ENCODE measurements at regions of chr9 and their contacts with region 1.

Region 1: GRCh38 chr9:4555251-4555650 is 65.0 kb downstream of the SLC1A1 start:
- DNase-seq: peak; percentile 25
- H3K4me3 Mint-ChIP-seq: no peak overlapping the region
- H3K27ac Mint-ChIP-seq: no peak overlapping the region
- H3K4me1 Mint-ChIP-seq: peaks cover 32% of the 10 kb centered on the region
- H3K27me3 Mint-ChIP-seq: no peaks in the 10 kb centered on the region

Region 2: GRCh38 chr9:3281399-3281798 is 1273.9 kb before region 1 on chr9:
- CTCF ChIA-PET with region 1: no interaction called
- intact Hi-C with region 1: no loop called
- DNase-seq: no peak
- H3K4me3 Mint-ChIP-seq: no peak overlapping the region
- H3K27ac Mint-ChIP-seq: no peak overlapping the region
- H3K4me1 Mint-ChIP-seq: peaks cover 5% of the 10 kb centered on the region
- H3K27me3 Mint-ChIP-seq: no peaks in the 10 kb centered on the region

Region 3: DNA sequence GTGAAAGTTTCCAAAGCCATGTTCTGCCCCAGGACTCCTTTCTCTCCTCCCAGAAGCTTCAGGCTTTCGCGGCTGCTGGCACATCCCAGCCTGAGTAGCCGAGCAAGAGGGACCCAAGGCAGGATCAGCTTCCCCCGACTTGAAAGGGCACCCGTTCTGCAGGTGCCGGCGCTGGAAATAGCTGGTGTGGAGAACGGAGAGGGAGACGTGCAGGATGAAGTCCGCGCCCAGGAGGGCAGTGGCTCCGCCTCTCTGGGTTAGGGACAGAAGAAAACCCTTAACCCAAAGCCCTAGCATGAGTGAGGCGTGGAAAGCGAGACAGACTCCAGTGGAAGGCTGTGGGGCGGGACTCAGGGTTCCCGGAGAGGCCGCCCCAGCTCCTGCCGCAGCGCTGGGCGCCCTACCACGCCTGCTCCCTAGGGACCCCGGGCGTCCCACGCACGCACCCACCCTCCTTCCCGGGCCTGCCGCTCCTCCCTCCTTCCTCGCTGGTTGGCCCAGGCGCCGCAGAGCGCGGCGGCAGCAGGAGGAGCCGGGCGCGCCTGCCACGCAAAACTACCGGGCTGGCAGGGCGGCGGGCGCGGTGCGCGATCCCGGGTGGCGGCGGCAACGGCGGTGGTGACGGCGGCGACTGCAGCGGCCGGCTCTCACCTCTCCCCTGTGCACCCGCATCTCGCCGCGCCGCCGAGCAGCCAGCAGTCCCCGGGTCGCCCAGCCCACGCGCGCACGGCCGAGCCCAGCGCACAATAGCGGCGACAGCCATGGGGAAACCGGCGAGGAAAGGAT is 65.1 kb before region 1 on chr9 and contains the start of gene SLC1A1:
- CTCF ChIA-PET with region 1: no interaction called
- intact Hi-C with region 1: loop called (anchors 10 kb)
- DNase-seq: peak; percentile 33
- H3K4me3 Mint-ChIP-seq: peak within 1 kb of the TSS; percentile 67
- H3K27ac Mint-ChIP-seq: no peak within 1 kb of the TSS
- H3K4me1 Mint-ChIP-seq: peaks cover 24% of the 10 kb centered on the region
- H3K27me3 Mint-ChIP-seq: peaks cover 42% of the 10 kb centered on the region
- total RNA-seq, gene SLC1A1: not detected

Region 4: GRCh38 chr9:4515958-4516375 is 39.3 kb before region 1 on chr9:
- CTCF ChIA-PET with region 1: no interaction called
- intact Hi-C with region 1: loop called (anchors 5 kb)
- DNase-seq: no peak
- H3K4me3 Mint-ChIP-seq: no peak overlapping the region
- H3K27ac Mint-ChIP-seq: no peak overlapping the region
- H3K4me1 Mint-ChIP-seq: peaks cover 22% of the 10 kb centered on the region
- H3K27me3 Mint-ChIP-seq: no peaks in the 10 kb centered on the region

Measured in activated naive CD4-positive, alpha-beta T cell treated with anti-CD3 and anti-CD28 coated beads for 36 hours (primary cell).